MCF 10A (cell line): ENCODE measurements at regions of chr15 and their contacts with region 1.

Region 1: GRCh38 chr15:98177924-98178592 is 217.6 kb downstream of the ARRDC4 start:
- DNase-seq: peak; percentile 78
- H3K4me3 Mint-ChIP-seq: no peak overlapping the region
- H3K27ac Mint-ChIP-seq: no peak overlapping the region
- H3K4me1 Mint-ChIP-seq: peaks cover 6% of the 10 kb centered on the region
- H3K27me3 Mint-ChIP-seq: no peaks in the 10 kb centered on the region
- CTCF ChIP-seq: peak; percentile 93

Region 2: DNA sequence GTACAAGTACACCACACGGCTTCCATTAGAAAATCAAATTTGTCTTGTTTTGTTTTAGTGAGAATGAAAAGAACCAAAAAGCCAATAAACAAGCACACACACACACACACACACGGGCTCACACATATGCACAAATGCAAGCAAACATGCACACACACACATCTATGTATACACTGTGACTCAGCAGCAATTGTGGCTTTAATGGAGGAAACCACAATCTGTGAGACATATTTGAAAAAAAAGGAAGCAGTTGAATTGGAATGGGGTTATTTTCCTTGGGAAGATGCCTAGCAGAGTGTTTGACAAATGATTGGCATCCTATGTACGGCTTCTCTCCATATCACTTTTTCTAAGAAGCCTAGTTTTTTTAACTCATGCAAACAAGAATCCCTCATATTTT is 418.7 kb before region 1 on chr15:
- CTCF ChIA-PET with region 1: interaction called, 9 read pairs
- POLR2A ChIA-PET with region 1: interaction called, 3 read pairs
- intact Hi-C with region 1: loop called (anchors 5 kb)
- DNase-seq: peak; percentile 57
- H3K4me3 Mint-ChIP-seq: no peak overlapping the region
- H3K27ac Mint-ChIP-seq: no peak overlapping the region
- H3K4me1 Mint-ChIP-seq: peaks cover 6% of the 10 kb centered on the region
- H3K27me3 Mint-ChIP-seq: peaks cover 42% of the 10 kb centered on the region
- CTCF ChIP-seq: no peak

Region 3: GRCh38 chr15:97903971-97904572 is 274.0 kb before region 1 on chr15:
- CTCF ChIA-PET with region 1: interaction called, 158 read pairs
- POLR2A ChIA-PET with region 1: interaction called, 7 read pairs
- intact Hi-C with region 1: loop called (anchors 1 kb)
- DNase-seq: peak; percentile 74
- H3K4me3 Mint-ChIP-seq: peak overlapping the region; percentile 55
- H3K27ac Mint-ChIP-seq: no peak overlapping the region
- H3K4me1 Mint-ChIP-seq: peaks cover 19% of the 10 kb centered on the region
- H3K27me3 Mint-ChIP-seq: no peaks in the 10 kb centered on the region
- CTCF ChIP-seq: peak; percentile 80

Region 4: GRCh38 chr15:97960364-97961066 is 217.5 kb before region 1 on chr15 and contains the start of gene ARRDC4:
- CTCF ChIA-PET with region 1: interaction called, 4 read pairs
- POLR2A ChIA-PET with region 1: no interaction called
- intact Hi-C with region 1: loop called (anchors 5 kb)
- DNase-seq: peak; percentile 99
- H3K4me3 Mint-ChIP-seq: peak within 1 kb of the TSS; percentile 83
- H3K27ac Mint-ChIP-seq: peak within 1 kb of the TSS; percentile 53
- H3K4me1 Mint-ChIP-seq: peaks cover 45% of the 10 kb centered on the region
- H3K27me3 Mint-ChIP-seq: no peaks in the 10 kb centered on the region
- CTCF ChIP-seq: no peak
- total RNA-seq, gene ARRDC4: 36.0 and 39.8 TPM in 2 replicates

Region 5: GRCh38 chr15:98164571-98164970 is 13.5 kb before region 1 on chr15:
- CTCF ChIA-PET with region 1: interaction called, 18 read pairs
- POLR2A ChIA-PET with region 1: interaction called, 6 read pairs
- intact Hi-C with region 1: no loop called
- DNase-seq: no peak
- H3K4me3 Mint-ChIP-seq: no peak overlapping the region
- H3K27ac Mint-ChIP-seq: peak overlapping the region; percentile 81
- H3K4me1 Mint-ChIP-seq: peaks cover 38% of the 10 kb centered on the region
- H3K27me3 Mint-ChIP-seq: no peaks in the 10 kb centered on the region
- CTCF ChIP-seq: no peak

Region 6: GRCh38 chr15:98428253-98428989 is 250.4 kb after region 1 on chr15:
- CTCF ChIA-PET with region 1: interaction called, 11 read pairs
- POLR2A ChIA-PET with region 1: no interaction called
- intact Hi-C with region 1: loop called (anchors 10 kb)
- DNase-seq: peak; percentile 59
- H3K4me3 Mint-ChIP-seq: peak overlapping the region; percentile 69
- H3K27ac Mint-ChIP-seq: no peak overlapping the region
- H3K4me1 Mint-ChIP-seq: peaks cover 8% of the 10 kb centered on the region
- H3K27me3 Mint-ChIP-seq: peaks cover 15% of the 10 kb centered on the region
- CTCF ChIP-seq: peak; percentile 79